OCI-LY7 (cell line): ENCODE measurements at regions of chr16 and their contacts with region 1.

Region 1: GRCh38 chr16:11255737-11256660 is at the start of gene SOCS1:
- DNase-seq: peak; percentile 89
- H3K4me3 ChIP-seq: peak within 1 kb of the TSS; percentile 95
- H3K27ac ChIP-seq: peak within 1 kb of the TSS; percentile 61
- H3K4me1 ChIP-seq: peaks cover 53% of the 10 kb centered on the region
- CTCF ChIP-seq: peak; percentile 81
- total RNA-seq, gene SOCS1: 45.8 and 47.1 TPM in 2 replicates

Region 2: GRCh38 chr16:10964039-10964890 is 291.7 kb before region 1 on chr16:
- CTCF ChIA-PET with region 1: no interaction called
- POLR2A ChIA-PET with region 1: interaction called, 4 read pairs
- intact Hi-C with region 1: loop called (anchors 1 kb)
- DNase-seq: peak; percentile 77
- H3K4me3 ChIP-seq: no peak overlapping the region
- H3K27ac ChIP-seq: no peak overlapping the region
- H3K4me1 ChIP-seq: peaks cover 17% of the 10 kb centered on the region
- CTCF ChIP-seq: peak; percentile 95

Region 3: DNA sequence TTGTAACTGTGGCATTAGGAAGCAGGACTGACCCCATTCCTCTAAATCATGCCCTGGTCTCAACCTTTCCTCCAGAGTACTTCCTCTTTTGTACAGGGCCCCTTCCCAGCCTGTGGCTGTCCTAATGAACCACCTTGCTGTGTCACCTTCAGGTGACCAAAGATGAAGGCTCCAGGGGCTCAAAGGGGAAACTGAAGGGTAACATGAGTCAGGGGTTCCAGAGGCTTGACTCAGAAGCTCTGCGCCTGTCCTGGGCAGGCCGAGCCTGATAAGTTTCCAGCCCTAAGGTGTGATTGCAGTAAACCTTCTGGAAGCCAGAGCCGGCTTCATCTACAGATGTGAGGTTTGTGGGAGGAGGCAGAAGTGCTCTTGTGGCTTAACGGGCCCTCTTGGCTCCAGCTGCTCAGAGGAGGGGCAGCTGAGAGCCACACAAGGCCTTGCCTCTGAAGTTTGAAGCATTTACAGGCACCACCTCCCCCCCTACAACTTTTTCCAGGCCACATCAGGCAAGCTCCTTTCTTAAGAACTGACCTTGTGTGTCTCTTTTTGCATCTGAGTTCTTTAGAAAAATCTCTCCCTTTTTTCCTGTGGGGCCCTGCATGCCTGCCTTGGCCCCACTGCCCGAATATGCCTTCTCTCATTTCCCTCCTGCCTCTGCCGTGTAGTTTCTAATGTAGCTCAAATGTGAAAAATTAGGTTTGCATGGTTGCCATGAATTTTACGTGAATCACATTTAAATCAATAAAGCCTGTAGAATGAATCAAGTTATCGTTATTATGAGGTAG is 161.7 kb before region 1 on chr16:
- CTCF ChIA-PET with region 1: no interaction called
- POLR2A ChIA-PET with region 1: no interaction called
- intact Hi-C with region 1: loop called (anchors 5 kb)
- DNase-seq: peak; percentile 69
- H3K4me3 ChIP-seq: no peak overlapping the region
- H3K27ac ChIP-seq: peak overlapping the region; percentile 53
- H3K4me1 ChIP-seq: peaks cover 27% of the 10 kb centered on the region
- CTCF ChIP-seq: no peak

Region 4: DNA sequence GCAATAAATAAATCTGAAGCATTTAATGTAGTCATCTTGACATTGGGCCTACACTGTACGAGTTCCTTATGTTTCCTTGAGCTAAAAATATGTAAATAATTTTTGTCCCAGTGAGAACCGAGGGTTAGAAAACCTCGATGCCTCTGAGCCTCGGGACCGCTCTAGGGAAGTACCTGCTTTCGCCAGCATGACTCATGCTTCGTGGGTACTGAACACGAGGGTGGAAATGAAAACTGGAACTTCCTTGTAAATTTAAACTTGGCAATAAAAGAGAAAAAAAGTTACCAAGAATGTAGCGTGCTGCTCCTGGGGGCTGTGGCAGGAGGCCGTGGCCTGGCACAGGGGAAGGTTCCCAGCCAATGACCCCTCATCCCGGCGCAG is 74.1 kb before region 1 on chr16:
- CTCF ChIA-PET with region 1: no interaction called
- POLR2A ChIA-PET with region 1: no interaction called
- intact Hi-C with region 1: no loop called
- DNase-seq: no peak
- H3K4me3 ChIP-seq: no peak overlapping the region
- H3K27ac ChIP-seq: no peak overlapping the region
- H3K4me1 ChIP-seq: no peaks in the 10 kb centered on the region
- CTCF ChIP-seq: no peak

Region 5: GRCh38 chr16:11218604-11218962 is 37.4 kb before region 1 on chr16:
- CTCF ChIA-PET with region 1: no interaction called
- POLR2A ChIA-PET with region 1: no interaction called
- intact Hi-C with region 1: no loop called
- DNase-seq: no peak
- H3K4me3 ChIP-seq: no peak overlapping the region
- H3K27ac ChIP-seq: no peak overlapping the region
- H3K4me1 ChIP-seq: no peaks in the 10 kb centered on the region
- CTCF ChIP-seq: peak; percentile 86

Region 6: DNA sequence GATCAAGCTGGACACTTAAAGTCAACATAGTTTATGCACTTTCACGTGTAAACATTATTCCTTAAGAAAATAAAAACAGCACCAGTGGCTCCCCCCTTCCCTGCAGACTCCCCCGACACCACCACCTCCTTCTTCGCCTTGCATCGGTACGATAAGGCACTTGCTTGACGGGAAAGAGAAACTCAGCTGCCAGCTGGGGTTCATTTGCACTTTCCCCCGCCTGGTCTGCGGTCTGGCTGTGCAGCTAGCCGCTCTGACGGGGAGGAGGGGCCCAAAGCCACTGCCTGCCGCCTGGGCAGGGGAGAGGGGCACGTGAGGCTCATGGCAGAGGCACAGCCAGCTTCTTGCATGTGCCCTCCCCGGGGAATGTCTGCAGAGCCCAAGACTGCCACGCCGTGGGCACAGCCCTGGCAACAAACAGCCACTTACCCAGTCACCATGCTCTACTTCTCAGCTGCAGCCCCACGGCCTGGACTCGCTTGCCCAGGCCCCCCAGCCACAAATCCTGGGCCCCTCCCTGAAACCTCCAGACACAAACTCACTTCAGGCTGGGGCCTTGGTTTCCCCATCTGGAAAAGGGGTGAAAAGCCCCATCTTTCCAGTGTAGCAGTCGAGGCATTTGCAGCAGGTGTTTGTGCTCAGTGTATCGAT is 41.6 kb after region 1 on chr16:
- CTCF ChIA-PET with region 1: interaction called, 19 read pairs
- POLR2A ChIA-PET with region 1: interaction called, 20 read pairs
- intact Hi-C with region 1: loop called (anchors 1 kb)
- DNase-seq: peak; percentile 96
- H3K4me3 ChIP-seq: peak overlapping the region; percentile 49
- H3K27ac ChIP-seq: peak overlapping the region; percentile 96
- H3K4me1 ChIP-seq: peaks cover 96% of the 10 kb centered on the region
- CTCF ChIP-seq: peak; percentile 41; the same call in 1 of the 2 replicates

Region 7: DNA sequence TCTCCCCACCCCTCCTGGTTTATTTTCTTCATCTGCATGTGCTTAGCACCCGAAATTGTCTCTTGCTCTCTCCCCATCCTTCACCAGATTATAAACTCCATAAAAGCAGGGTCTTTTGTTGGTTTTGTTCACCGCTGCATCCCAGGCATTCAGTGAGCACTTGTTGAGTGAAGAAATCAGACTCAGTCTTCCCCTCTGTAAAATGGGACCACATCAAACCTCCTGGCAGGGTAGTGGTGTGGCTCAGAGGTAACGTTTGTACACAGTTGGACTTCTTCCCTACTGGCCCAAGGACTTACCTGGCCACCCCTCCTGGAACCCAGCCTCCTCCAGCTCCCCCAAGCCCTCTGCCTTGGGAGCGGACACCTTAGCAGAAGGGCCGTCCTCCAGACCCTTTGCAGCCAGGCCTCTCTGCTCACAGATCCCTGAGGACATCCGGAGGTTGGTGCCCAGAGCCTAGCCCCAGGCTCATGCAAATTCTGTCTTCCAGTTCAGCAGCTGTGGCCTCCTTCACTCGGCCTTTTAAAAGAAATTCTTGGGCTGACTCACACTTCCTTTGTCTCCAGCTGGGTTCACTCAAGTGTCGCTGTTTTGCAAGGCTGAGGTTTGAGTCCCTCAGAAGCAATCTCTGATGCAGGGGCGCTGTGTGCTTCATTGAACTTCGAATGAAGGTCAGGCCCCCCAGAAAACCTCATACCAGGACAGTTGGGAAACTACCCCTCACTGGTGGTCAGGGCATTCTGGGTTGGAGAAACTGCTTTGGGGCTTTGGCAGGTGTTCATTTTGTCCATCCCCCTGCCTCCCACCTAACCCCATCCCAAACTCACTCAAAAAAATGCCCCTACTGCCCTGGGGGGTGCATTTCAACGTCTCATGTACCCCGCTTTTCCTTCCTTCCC is 72.4 kb after region 1 on chr16:
- CTCF ChIA-PET with region 1: interaction called, 8 read pairs
- POLR2A ChIA-PET with region 1: interaction called, 3 read pairs
- intact Hi-C with region 1: loop called (anchors 1 kb)
- DNase-seq: peak; percentile 98
- H3K4me3 ChIP-seq: peak overlapping the region; percentile 62
- H3K27ac ChIP-seq: peak overlapping the region; percentile 93
- H3K4me1 ChIP-seq: peaks cover 76% of the 10 kb centered on the region
- CTCF ChIP-seq: peak; percentile 51

Region 8: DNA sequence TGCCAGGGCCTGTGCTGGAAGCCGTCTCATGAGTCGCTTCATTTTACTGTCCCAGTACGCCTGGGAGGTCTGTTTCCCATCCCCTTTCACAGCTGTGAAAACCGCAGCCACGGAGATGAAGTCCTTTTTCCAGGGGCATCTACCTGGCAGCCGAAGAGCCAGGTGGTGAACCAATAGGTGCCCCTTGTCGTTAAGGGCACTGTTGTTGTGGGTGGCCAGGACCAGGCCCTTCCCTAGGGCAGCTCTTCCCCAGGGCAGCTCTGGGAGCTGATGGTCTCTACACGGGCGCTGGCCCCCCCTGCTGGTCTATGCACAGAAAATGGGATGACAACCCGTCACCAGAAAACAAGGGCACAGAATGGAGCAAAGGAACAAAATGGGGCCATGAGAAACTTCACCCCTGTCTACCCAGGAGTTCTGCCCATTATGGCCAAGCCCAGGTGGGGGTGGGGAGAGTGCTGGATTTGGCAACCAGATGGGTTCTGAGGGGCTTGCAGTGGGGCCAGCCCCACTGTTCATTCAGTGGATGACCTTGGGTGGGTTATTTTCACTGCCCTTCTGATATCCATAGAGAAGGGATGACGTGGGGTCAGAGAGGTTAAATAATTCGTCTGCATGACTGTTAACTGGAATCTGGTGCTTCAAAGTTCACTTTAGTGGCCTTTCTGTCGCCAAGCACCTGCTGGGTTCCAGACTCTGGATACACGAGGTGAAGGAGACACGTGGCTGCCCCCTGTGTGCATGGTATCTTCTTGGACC is 100.8 kb after region 1 on chr16:
- CTCF ChIA-PET with region 1: interaction called, 7 read pairs
- POLR2A ChIA-PET with region 1: interaction called, 12 read pairs
- intact Hi-C with region 1: loop called (anchors 1 kb)
- DNase-seq: peak; percentile 78
- H3K4me3 ChIP-seq: peak overlapping the region; percentile 39
- H3K27ac ChIP-seq: peak overlapping the region; percentile 91
- H3K4me1 ChIP-seq: peaks cover 85% of the 10 kb centered on the region
- CTCF ChIP-seq: peak; percentile 98

Region 9: DNA sequence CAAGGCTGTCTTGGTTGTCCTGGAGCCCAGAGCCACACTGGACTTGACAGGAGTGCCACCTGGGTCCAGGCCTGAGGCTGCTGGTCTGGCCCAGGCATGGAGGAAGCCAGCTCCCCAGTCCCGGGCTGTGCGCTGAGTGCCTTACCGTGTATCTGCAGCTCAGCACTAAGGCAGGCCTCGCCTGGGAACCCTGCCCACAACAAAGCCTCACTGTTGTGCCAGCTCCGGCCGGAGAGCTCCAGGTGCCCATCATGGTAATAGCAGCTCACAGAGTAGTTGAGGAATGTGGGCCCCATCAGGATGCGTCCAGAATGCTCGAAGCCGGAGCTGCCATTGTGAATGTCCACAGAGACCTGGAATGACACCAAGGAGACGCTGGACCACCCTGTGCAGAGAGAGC is 161.5 kb after region 1 on chr16:
- CTCF ChIA-PET with region 1: no interaction called
- POLR2A ChIA-PET with region 1: no interaction called
- intact Hi-C with region 1: no loop called
- DNase-seq: no peak
- H3K4me3 ChIP-seq: no peak overlapping the region
- H3K27ac ChIP-seq: no peak overlapping the region
- H3K4me1 ChIP-seq: no peaks in the 10 kb centered on the region
- CTCF ChIP-seq: no peak